ENCODE measurements at regions of chr9 and their contacts with region 1.

Region 1: DNA sequence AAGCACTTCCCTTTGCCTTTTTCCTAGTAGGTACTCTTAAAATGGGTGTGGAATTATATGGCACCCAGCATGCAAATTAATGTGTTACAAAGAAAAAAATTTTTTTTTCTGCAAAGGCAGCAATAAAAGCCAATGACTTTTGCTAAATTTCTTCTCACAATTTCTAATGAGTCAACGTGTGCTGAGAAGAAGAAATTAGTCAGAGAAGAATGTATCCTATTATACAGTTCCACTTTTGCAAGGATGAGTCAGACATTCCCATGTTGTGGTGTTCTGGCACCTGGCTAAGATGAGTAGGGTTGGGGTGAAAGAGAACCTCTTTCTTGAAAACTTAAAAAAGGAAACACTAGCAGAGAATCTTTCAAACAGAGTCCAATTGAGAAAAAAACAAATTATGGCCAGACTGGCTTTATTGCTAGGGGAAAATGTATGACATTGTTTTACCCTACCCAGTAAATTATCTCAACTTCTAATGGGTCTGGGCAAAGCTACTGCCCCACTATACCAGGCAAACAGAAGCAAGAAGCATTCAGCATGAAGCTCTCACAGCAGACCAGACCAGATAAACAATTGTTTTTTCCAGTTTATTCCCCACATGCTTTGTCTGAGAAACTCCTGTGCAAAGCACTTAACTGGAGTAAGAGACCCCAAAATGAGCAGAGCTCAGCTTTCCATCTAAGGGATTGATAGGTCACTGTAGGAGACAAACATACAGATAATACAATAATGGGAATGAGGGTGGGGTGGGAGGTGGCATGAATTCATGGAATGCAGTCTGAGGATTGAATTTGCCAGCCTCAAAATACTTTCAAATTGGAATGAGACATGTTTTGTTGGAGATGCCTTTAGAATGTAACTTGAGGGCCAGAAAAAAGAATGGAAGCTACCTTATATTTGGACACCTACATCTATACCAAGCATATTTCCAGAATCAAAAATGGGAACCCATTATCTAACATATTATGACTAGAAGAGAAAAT is 220.8 kb upstream of the RFX3 start:
- DNase-seq: no peak
- H3K4me3 Mint-ChIP-seq: no peak overlapping the region
- H3K27ac Mint-ChIP-seq: peak overlapping the region; percentile 76
- H3K4me1 Mint-ChIP-seq: peaks cover 32% of the 10 kb centered on the region
- H3K27me3 Mint-ChIP-seq: no peaks in the 10 kb centered on the region

Region 2: DNA sequence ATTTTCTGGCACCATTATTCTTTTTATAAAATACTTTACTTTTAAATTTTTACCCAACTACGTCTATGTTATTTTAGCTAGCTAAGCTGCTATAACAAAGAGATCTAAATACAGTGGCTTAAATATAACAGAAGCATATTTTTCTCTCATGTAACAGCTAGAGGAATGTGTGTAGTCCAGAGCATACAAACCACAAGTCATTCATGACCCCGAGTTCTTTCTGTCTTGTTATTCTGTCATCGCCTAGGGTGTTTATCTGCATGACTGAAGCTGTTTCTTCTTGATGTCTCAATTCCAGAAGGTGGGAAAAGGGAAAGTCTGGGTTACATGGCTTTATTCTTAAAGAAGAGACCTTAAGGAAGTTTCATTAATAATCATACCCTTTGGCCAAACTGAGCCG is 83.9 kb before region 1 on chr9:
- intact Hi-C with region 1: no loop called
- DNase-seq: no peak
- H3K4me3 Mint-ChIP-seq: no peak overlapping the region
- H3K27ac Mint-ChIP-seq: no peak overlapping the region
- H3K4me1 Mint-ChIP-seq: no peaks in the 10 kb centered on the region
- H3K27me3 Mint-ChIP-seq: no peaks in the 10 kb centered on the region

Region 3: DNA sequence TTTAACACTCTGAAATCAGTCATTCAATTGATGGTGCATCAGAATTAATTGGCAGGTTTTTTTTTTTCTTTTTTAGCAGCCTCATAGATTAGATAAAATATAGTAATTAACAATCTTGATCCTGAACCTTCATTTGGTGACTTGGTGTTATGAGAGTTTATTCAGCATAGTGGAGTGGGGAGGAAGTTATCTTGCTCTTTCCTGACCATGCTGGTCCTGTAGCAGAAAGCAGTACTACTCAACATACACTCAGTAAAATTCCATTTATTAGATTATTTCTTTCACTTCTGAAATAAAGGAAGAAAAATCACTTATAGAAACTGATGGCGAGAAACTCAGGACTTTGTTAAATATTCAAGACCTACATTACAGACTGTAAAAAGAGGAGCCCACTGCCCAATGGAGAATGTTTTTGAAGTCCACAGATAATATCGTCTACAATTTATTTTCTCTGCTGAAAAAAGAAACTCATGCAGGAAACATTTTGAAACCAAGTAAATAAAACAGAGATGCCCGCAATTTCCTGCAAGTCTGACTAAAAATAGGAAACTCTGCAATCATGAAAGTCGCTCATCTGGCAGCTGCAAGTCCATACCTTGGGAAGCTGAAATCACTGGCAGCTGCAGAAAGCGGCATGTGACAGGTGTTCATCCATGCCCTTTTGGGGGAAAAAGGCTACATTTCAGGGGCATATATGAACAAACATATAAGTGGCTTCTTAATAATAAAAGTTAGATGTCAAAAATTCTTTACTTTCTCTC is 12.4 kb after region 1 on chr9:
- intact Hi-C with region 1: loop called (anchors 1 kb)
- DNase-seq: peak; percentile 10
- H3K4me3 Mint-ChIP-seq: no peak overlapping the region
- H3K27ac Mint-ChIP-seq: no peak overlapping the region
- H3K4me1 Mint-ChIP-seq: peaks cover 26% of the 10 kb centered on the region
- H3K27me3 Mint-ChIP-seq: no peaks in the 10 kb centered on the region

Region 4: GRCh38 chr9:3868012-3868411 is 121.4 kb after region 1 on chr9:
- intact Hi-C with region 1: loop called (anchors 5 kb)
- DNase-seq: no peak
- H3K4me3 Mint-ChIP-seq: no peak overlapping the region
- H3K27ac Mint-ChIP-seq: no peak overlapping the region
- H3K4me1 Mint-ChIP-seq: peaks cover 57% of the 10 kb centered on the region
- H3K27me3 Mint-ChIP-seq: no peaks in the 10 kb centered on the region

Measured in activated T-helper 2 cell treated with anti-CD3 and anti-CD28 coated beads, Interferon-gamma antibody, Interleukin-2, Interleukin-4, amounts not matched to agents 10 μg/mL and 5 μg/mL and 100 μg/mL, durations not matched to agents 14 hours and 24 hours and 36 hours (primary cell).